Activated T-helper 2 cell treated with anti-CD3 and anti-CD28 coated beads, Interferon-gamma antibody, Interleukin-2, Interleukin-4, amounts not matched to agents 10 μg/mL and 5 μg/mL and 100 μg/mL, durations not matched to agents 14 hours and 24 hours and 36 hours (primary cell): ENCODE measurements at regions of chr6 and their contacts with region 1.

Region 1: GRCh38 chr6:144349690-144350527 is 64.8 kb downstream of the UTRN start:
- DNase-seq: no peak
- H3K4me3 Mint-ChIP-seq: peak overlapping the region; percentile 80
- H3K27ac Mint-ChIP-seq: peak overlapping the region; percentile 95
- H3K4me1 Mint-ChIP-seq: peaks cover 74% of the 10 kb centered on the region
- H3K27me3 Mint-ChIP-seq: no peaks in the 10 kb centered on the region

Region 2: DNA sequence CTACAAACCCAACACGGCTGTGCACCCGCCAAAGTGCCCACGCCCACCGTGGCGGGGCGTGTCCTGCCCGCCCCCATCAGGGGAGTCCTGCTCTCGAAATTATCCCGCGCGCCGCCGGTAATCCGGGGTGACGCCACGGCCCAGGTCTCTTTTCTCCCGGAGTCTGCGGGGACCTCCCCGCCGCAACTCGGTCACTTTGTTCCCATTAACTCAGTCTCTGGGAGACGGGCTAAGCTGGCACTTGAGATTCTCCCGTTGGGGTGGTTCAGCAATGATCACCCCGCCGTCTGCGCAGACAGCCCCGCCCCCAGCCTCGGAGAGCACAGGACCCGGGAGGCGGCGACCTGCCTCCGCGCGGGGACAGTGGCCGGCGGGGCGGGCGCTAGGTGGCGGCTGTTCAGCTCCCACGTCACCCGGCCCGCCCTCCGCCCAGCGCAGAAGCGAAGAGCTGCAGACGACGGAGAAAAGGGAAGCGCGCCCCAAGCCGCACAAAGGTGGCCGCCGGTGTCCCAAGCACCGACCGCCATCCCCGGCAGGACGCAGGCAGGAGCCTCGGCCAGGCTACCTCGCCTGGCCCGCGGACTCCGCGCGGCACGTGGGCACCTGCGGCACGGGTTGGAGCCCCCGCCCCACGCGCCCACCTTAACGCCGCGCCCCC is 286.0 kb before region 1 on chr6:
- intact Hi-C with region 1: loop called (anchors 5 kb)
- DNase-seq: peak; percentile 89
- H3K4me3 Mint-ChIP-seq: peak overlapping the region; percentile 87
- H3K27ac Mint-ChIP-seq: peak overlapping the region; percentile 89
- H3K4me1 Mint-ChIP-seq: peaks cover 43% of the 10 kb centered on the region
- H3K27me3 Mint-ChIP-seq: no peaks in the 10 kb centered on the region

Region 3: DNA sequence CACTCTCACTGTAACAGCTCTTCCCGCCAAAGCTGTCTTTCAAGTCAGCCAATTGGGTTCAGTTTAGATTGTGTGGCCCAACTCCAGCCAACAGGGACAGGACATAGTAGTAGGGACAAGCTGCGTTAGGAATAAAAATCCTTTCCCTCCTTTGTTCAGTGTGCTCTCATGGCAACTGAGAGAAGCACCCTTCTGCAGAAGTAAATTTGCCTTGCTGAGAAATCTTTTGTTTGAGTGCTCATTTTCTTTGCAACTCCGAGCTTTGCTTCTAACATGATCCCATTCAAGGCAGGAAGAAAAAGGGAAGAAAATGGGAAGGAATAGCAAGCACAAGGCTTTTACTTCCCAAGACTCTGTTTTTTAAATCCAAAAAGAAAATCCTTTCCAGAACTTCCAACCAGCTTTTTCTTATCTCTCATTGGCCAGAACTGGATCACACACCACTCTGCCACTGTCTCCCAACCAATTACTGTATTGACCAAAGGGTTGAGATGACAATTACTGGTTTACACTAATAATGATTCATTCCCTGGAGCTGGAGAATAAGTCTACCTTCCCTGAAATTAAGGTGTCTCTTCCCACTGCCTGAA is 146.9 kb before region 1 on chr6:
- intact Hi-C with region 1: no loop called
- DNase-seq: no peak
- H3K4me3 Mint-ChIP-seq: no peak overlapping the region
- H3K27ac Mint-ChIP-seq: no peak overlapping the region
- H3K4me1 Mint-ChIP-seq: peaks cover 2% of the 10 kb centered on the region
- H3K27me3 Mint-ChIP-seq: peaks cover 28% of the 10 kb centered on the region

Region 4: GRCh38 chr6:144411332-144412190 is 61.7 kb after region 1 on chr6:
- intact Hi-C with region 1: loop called (anchors 5 kb)
- DNase-seq: no peak
- H3K4me3 Mint-ChIP-seq: peak overlapping the region; percentile 64
- H3K27ac Mint-ChIP-seq: peak overlapping the region; percentile 79
- H3K4me1 Mint-ChIP-seq: peaks cover 23% of the 10 kb centered on the region
- H3K27me3 Mint-ChIP-seq: no peaks in the 10 kb centered on the region

Region 5: GRCh38 chr6:144423167-144423566 is 73.3 kb after region 1 on chr6:
- intact Hi-C with region 1: no loop called
- DNase-seq: no peak
- H3K4me3 Mint-ChIP-seq: no peak overlapping the region
- H3K27ac Mint-ChIP-seq: no peak overlapping the region
- H3K4me1 Mint-ChIP-seq: peaks cover 13% of the 10 kb centered on the region
- H3K27me3 Mint-ChIP-seq: no peaks in the 10 kb centered on the region

Region 6: DNA sequence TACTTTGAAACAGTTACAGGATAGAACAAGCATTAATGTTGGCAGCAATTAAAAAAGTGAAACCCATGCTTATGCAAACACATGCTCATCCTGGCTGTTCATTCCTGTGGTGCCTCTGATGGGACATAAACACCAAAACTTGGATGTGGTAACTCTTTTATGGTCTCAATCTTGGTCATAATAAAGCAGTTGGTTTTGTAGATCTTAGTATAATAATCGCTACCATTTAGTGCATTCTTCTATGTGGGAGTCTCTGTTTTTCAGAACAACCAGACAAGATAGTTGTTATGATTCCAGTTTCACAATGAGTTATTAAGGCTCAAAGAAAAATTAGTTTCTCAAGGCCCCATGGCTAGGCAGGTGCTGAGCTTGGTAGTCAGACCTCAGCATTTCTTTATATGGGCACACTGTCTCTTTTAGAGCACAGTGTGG is 119.3 kb after region 1 on chr6:
- intact Hi-C with region 1: loop called (anchors 5 kb)
- DNase-seq: no peak
- H3K4me3 Mint-ChIP-seq: peak overlapping the region; percentile 28
- H3K27ac Mint-ChIP-seq: peak overlapping the region; percentile 69
- H3K4me1 Mint-ChIP-seq: peaks cover 29% of the 10 kb centered on the region
- H3K27me3 Mint-ChIP-seq: no peaks in the 10 kb centered on the region

Region 7: GRCh38 chr6:144482142-144482541 is 132.2 kb after region 1 on chr6:
- intact Hi-C with region 1: loop called (anchors 5 kb)
- DNase-seq: peak; percentile 49
- H3K4me3 Mint-ChIP-seq: no peak overlapping the region
- H3K27ac Mint-ChIP-seq: no peak overlapping the region
- H3K4me1 Mint-ChIP-seq: peaks cover 10% of the 10 kb centered on the region
- H3K27me3 Mint-ChIP-seq: no peaks in the 10 kb centered on the region